PC-3 (cell line): ENCODE measurements at regions of chr6 and their contacts with region 1.

Region 1: GRCh38 chr6:149717588-149718458 is at the start of gene LATS1:
- DNase-seq: peak; percentile 75
- ATAC-seq: peak; percentile 80
- H3K4me3 ChIP-seq: peak within 1 kb of the TSS; percentile 87
- H3K27ac ChIP-seq: peak within 1 kb of the TSS; percentile 94
- H3K4me1 ChIP-seq: peaks cover 8% of the 10 kb centered on the region
- H3K27me3 ChIP-seq: no peaks in the 10 kb centered on the region
- CTCF ChIP-seq: no peak
- total RNA-seq, gene LATS1: 9.2 and 9.7 TPM in 2 replicates

Region 2: GRCh38 chr6:149565527-149566409 is 152.1 kb before region 1 on chr6 and contains the start of gene GINM1:
- CTCF ChIA-PET with region 1: no interaction called
- POLR2A ChIA-PET with region 1: no interaction called
- intact Hi-C with region 1: loop called (anchors 5 kb)
- DNase-seq: peak; percentile 95
- ATAC-seq: peak; percentile 84
- H3K4me3 ChIP-seq: peak within 1 kb of the TSS; percentile 94
- H3K27ac ChIP-seq: peak within 1 kb of the TSS; percentile 37; the same call in 1 of the 2 replicates
- H3K4me1 ChIP-seq: peaks cover 26% of the 10 kb centered on the region
- H3K27me3 ChIP-seq: no peaks in the 10 kb centered on the region
- CTCF ChIP-seq: peak; percentile 71
- total RNA-seq, gene GINM1: 15.0 and 19.2 TPM in 2 replicates

Region 3: DNA sequence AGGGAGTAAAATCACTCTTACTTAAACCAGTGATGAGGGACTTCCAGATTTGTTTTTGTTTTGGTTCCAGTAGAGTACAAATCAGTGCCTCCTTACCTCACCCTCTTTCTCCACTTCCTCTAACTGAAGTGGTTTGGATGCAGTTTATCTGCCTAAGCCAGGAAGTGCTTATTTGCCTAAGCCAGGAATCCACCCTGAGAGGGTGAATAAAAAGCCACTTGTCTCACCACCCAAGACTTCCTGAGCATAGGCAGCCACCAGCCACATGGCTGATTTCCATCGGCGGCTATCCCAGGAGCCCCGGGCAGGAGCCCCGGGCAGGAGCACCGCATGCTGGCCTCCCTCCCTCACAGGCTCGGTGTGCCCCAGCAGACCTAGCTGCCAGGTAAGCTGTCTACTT is 134.4 kb after region 1 on chr6:
- CTCF ChIA-PET with region 1: no interaction called
- POLR2A ChIA-PET with region 1: interaction called, 11 read pairs
- intact Hi-C with region 1: no loop called
- DNase-seq: peak; percentile 79
- ATAC-seq: peak; percentile 41
- H3K4me3 ChIP-seq: peak overlapping the region; percentile 56
- H3K27ac ChIP-seq: peak overlapping the region; percentile 89
- H3K4me1 ChIP-seq: peaks cover 63% of the 10 kb centered on the region
- H3K27me3 ChIP-seq: no peaks in the 10 kb centered on the region
- CTCF ChIP-seq: no peak

Region 4: DNA sequence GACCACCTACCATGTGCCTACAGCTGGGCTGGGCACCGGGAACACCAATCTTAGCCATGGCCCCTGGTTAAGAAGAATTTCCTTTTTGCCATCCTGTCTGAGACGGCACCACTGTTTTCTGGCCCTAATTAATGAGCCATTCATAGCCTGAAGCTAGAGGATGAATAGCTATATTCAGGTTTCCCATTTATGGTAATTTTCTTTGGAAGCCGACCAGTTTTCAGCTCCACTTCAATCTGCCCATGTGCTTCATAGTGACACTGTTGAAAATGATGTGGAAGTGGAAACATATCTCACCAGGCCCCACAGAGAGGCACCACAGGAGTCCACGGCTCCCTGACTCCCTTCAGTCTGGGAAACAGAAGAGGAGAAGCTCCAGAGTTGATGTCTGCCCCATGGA is 373.7 kb after region 1 on chr6:
- CTCF ChIA-PET with region 1: no interaction called
- POLR2A ChIA-PET with region 1: no interaction called
- intact Hi-C with region 1: no loop called
- DNase-seq: no peak
- ATAC-seq: no peak
- H3K4me3 ChIP-seq: no peak overlapping the region
- H3K27ac ChIP-seq: no peak overlapping the region
- H3K4me1 ChIP-seq: no peaks in the 10 kb centered on the region
- H3K27me3 ChIP-seq: peaks cover 8% of the 10 kb centered on the region; the same call in 1 of the 2 replicates
- CTCF ChIP-seq: no peak